PC-9 (cell line): ENCODE measurements at regions of chr12 and their contacts with region 1.

Region 1: GRCh38 chr12:122871851-122872780 is 23.8 kb downstream of the VPS37B start:
- DNase-seq: peak; percentile 66 to 75
- H3K4me3 ChIP-seq: no peak overlapping the region
- H3K27ac ChIP-seq: peak overlapping the region; percentile 28; the same call in 1 of the 2 replicates
- H3K4me1 ChIP-seq: no peaks in the 10 kb centered on the region
- H3K27me3 ChIP-seq: no peaks in the 10 kb centered on the region
- CTCF ChIP-seq: no peak

Region 2: DNA sequence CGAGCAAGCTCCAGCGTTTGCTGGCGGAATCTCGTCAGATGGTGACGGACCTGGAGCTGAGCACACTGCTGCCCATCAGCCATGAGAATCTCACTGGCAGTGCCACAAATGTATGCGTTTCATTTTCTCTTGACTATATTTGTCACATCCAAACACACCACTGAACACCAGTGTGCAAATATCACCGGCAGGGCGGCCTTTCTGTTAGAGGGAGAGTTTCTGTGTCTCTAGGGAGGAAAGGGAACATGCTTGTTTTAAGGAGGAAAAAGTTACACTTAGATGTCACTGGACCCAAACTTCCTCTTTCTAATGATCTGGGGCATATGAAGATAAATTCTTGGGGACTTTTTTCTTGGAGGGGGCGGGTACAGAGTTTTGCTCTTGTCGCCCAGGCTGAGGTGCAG is 58.8 kb before region 1 on chr12:
- CTCF ChIA-PET with region 1: interaction called, 13 read pairs
- POLR2A ChIA-PET with region 1: no interaction called
- intact Hi-C with region 1: no loop called
- DNase-seq: no peak
- H3K4me3 ChIP-seq: no peak overlapping the region
- H3K27ac ChIP-seq: no peak overlapping the region
- H3K4me1 ChIP-seq: 0 out of 2 replicates have a peak, but pooled peaks cover 7% of the 10 kb centered on the region
- H3K27me3 ChIP-seq: no peaks in the 10 kb centered on the region
- CTCF ChIP-seq: no peak

Region 3: GRCh38 chr12:122888232-122888867 is 16.2 kb after region 1 on chr12:
- CTCF ChIA-PET with region 1: no interaction called
- POLR2A ChIA-PET with region 1: interaction called, 5 read pairs
- intact Hi-C with region 1: loop called (anchors 1 kb)
- DNase-seq: peak; percentile 86 to 98
- H3K4me3 ChIP-seq: peak overlapping the region; percentile 48; the same call in 1 of the 2 replicates
- H3K27ac ChIP-seq: peak overlapping the region; percentile 97
- H3K4me1 ChIP-seq: peaks cover 86% of the 10 kb centered on the region
- H3K27me3 ChIP-seq: no peaks in the 10 kb centered on the region
- CTCF ChIP-seq: no peak

Region 4: DNA sequence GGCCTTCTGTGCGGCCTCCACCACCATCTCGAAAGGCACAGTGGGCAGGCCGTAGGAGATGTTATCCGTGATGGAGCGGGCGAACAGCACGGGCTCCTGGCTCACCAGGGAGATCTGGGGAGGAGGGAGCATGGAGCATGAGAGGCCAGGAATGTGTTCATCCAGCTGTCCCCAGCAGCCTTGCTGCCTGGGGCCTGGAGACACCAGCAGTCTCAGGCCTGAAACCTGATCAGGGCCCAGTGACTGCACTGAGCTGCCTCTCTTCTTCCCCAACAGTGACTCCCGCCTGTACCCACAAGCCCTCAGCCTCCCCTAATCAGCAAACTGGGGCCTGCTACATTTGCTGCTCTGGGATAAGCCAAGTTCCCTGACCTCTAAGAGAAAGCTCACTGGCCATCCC is 63.2 kb after region 1 on chr12:
- CTCF ChIA-PET with region 1: no interaction called
- POLR2A ChIA-PET with region 1: no interaction called
- intact Hi-C with region 1: no loop called
- DNase-seq: no peak
- H3K4me3 ChIP-seq: no peak overlapping the region
- H3K27ac ChIP-seq: no peak overlapping the region; the same call in 1 of the 2 replicates
- H3K4me1 ChIP-seq: no peaks in the 10 kb centered on the region
- H3K27me3 ChIP-seq: no peaks in the 10 kb centered on the region
- CTCF ChIP-seq: no peak

Region 5: DNA sequence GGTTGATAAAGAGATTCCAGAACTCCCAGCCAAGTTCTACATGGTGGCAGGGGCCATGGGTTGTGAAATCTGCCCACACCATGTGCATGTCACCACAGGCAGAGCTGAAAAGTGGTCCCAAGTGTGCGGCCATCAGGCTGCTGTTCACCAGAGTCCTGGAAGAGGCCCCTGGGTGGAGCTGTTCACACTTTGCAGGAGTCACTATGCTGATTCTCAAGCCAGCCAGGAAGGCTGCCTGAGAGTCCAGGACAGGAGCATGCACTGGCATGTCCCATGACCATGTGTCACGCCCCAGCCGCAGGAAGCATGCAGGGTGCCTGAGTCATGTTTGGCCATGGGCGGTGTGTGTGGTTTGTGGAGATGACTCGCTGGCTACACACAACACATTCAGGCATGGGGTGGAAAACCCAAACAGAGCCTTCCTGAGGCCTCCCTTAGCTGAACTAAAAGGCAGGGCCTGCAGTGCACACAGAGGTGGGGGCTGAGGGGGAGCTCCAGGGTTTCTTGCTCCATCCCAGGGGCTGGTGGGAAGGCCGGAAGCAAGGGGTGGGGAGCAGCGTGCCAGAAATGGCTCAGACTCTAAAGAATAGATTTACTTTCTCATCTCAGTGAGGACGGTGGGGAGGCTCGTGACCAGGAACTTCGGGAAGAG is 74.7 kb after region 1 on chr12:
- CTCF ChIA-PET with region 1: no interaction called
- POLR2A ChIA-PET with region 1: no interaction called
- intact Hi-C with region 1: loop called (anchors 1 kb)
- DNase-seq: peak; percentile 87 to 91
- H3K4me3 ChIP-seq: no peak overlapping the region
- H3K27ac ChIP-seq: peak overlapping the region; percentile 58
- H3K4me1 ChIP-seq: peaks cover 62% of the 10 kb centered on the region
- H3K27me3 ChIP-seq: no peaks in the 10 kb centered on the region
- CTCF ChIP-seq: no peak; the same call in 1 of the 2 replicates

Region 6: DNA sequence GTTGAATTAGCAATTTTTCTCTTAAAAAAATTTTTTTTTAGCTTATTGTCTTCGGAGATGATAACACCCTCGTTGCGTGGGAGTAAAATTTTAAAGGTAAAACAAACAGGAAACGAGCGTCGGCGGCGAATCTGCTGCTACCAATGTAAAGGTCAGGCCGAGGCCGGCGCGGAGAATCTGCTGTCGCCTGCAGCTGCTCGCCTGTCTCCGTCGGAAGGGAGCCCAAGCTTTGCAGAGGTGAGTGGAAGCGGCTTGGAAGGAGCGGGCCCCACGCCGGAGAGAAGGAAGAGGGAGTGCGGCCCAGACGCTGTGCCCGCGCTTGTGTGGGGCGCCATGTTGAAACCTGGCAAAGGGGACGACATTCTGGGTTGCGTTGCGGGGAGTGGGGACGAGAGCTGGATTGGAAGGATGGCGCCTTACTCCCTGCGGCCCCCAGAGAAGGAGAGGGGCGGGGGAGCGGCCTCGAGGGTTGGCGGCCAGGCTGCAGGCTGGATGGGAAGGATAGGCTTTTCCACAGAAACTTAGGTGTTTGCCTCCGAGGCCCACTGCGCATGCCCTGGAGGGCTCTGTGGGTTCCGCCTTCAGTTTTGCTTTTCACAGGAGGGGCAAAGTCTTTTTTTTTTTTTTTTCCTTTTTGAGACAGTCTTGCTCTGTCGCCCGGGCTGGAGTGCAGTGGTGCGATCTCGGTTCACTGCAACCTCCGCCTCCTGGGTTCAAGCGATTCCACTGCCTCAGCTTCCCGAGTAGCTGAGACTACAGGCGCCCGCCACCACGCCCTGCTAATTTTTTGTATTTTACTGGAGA is 586.1 kb after region 1 on chr12 and contains the start of gene SNRNP35:
- CTCF ChIA-PET with region 1: no interaction called
- POLR2A ChIA-PET with region 1: no interaction called
- intact Hi-C with region 1: no loop called
- DNase-seq: peak; percentile 56 to 78
- H3K4me3 ChIP-seq: peak within 1 kb of the TSS; percentile 89
- H3K27ac ChIP-seq: peak within 1 kb of the TSS; percentile 99
- H3K4me1 ChIP-seq: 0 out of 2 replicates have a peak, but pooled peaks cover 6% of the 10 kb centered on the region
- H3K27me3 ChIP-seq: no peaks in the 10 kb centered on the region
- CTCF ChIP-seq: no peak
- total RNA-seq, gene SNRNP35: 24.3 and 28.6 TPM in 2 replicates

Region 7: DNA sequence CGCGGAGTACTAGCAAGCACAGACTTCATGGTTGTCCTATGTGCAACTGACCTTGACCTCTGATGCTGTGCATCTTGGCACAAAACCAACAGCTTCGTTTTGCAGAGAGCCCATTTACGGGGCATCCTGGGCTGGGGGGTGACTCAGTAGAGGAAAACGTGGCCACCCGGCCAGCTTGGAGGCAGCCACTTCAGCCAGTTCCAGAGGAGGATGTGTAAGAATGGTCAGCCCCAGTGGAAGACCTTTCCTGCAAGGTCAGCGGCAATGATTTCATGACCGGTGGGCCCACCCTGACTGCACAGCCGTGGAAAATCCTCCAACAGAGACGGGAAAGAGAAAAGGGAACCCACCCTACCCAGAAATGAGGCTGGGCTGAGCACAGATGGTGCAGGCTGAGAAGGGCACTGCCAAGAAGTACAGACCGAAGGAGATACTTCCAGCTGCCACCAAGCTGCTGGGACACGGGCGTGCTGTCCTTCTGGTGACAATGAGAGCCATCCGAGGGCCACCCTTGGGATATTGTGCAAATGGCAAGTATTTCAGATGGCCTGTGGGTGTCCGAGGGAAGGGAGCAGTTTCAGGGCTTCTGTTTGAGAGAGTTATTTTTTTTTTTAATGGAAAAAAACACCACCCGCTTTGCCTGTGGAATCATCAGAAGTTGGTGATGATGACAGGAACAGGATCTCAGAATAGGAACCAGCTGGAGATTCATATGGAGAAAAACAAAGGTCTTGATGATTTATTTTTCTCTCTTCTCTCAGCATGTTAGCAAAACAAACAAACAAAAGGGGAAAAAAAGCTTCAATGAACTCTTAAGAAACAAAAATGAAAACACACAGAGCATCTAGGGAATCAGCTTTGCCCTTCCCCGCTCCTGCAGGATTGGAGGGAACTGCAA is 1302.6 kb after region 1 on chr12:
- CTCF ChIA-PET with region 1: no interaction called
- POLR2A ChIA-PET with region 1: no interaction called
- intact Hi-C with region 1: no loop called
- DNase-seq: no peak
- H3K4me3 ChIP-seq: no peak overlapping the region
- H3K27ac ChIP-seq: no peak overlapping the region
- H3K4me1 ChIP-seq: no peaks in the 10 kb centered on the region
- H3K27me3 ChIP-seq: peaks cover 73% of the 10 kb centered on the region
- CTCF ChIP-seq: no peak